CD4-positive, alpha-beta T cell (primary cell): ENCODE measurements at regions of chr10 and their contacts with region 1.

Region 1: DNA sequence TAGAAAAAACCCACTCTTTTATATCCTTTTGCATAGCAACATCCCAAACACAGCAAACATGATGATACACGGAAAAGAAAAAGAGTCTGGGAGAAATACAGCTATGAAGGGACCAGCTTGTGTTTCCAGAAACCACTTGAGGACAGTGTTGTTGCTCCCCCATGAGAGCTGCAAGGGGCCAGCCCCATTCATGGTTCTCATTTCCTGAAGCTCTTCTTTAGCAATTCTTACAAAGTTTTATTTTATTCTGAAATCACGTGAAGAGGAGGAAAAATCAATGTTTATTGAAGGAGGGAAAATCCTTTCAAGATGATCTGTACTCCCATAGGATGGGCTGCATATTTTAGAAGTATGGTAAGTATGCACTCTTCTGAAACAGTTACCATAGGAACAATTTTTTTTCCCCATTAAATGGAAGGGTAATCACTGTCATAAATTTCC is 17.5 kb upstream of the PRTFDC1 start:
- DNase-seq: no peak
- ATAC-seq: no peak
- H3K4me3 ChIP-seq: no peak overlapping the region
- H3K4me3 Mint-ChIP-seq: no peak overlapping the region
- H3K27ac ChIP-seq: no peak overlapping the region
- H3K27ac Mint-ChIP-seq: no peak overlapping the region
- H3K4me1 ChIP-seq: peaks cover 3% of the 10 kb centered on the region
- H3K4me1 Mint-ChIP-seq: no peaks in the 10 kb centered on the region
- H3K27me3 ChIP-seq: no peaks in the 10 kb centered on the region
- H3K27me3 Mint-ChIP-seq: no peaks in the 10 kb centered on the region
- CTCF ChIP-seq: no peak

Region 2: GRCh38 chr10:24784923-24785322 is 184.9 kb before region 1 on chr10:
- CTCF ChIA-PET with region 1: no interaction called
- POLR2A ChIA-PET with region 1: no interaction called
- intact Hi-C with region 1: loop called in 1 of 2 experiments (anchors 5 kb)
- DNase-seq: no peak
- ATAC-seq: no peak
- H3K4me3 ChIP-seq: no peak overlapping the region
- H3K4me3 Mint-ChIP-seq: no peak overlapping the region
- H3K27ac ChIP-seq: no peak overlapping the region
- H3K27ac Mint-ChIP-seq: no peak overlapping the region
- H3K4me1 ChIP-seq: no peaks in the 10 kb centered on the region
- H3K4me1 Mint-ChIP-seq: no peaks in the 10 kb centered on the region
- H3K27me3 ChIP-seq: peaks cover 0 to 2% of the 10 kb centered on the region in 2 experiments
- H3K27me3 Mint-ChIP-seq: peaks cover 4% of the 10 kb centered on the region
- CTCF ChIP-seq: no peak

Region 3: GRCh38 chr10:24873281-24873683 is 96.6 kb before region 1 on chr10:
- CTCF ChIA-PET with region 1: no interaction called
- POLR2A ChIA-PET with region 1: no interaction called
- intact Hi-C with region 1: no loop called
- DNase-seq: peak in 3 of 14 experiments; percentile 30 to 34 (median 31)
- ATAC-seq: no peak
- H3K4me3 ChIP-seq: no peak overlapping the region
- H3K4me3 Mint-ChIP-seq: no peak overlapping the region
- H3K27ac ChIP-seq: no peak overlapping the region
- H3K27ac Mint-ChIP-seq: no peak overlapping the region
- H3K4me1 ChIP-seq: peaks cover 3% of the 10 kb centered on the region
- H3K4me1 Mint-ChIP-seq: peaks cover 14% of the 10 kb centered on the region
- H3K27me3 ChIP-seq: no peaks in the 10 kb centered on the region
- H3K27me3 Mint-ChIP-seq: no peaks in the 10 kb centered on the region
- CTCF ChIP-seq: no peak